Ovary (tissue), 10 donors: ENCODE measurements at regions of chr22 and their contacts with region 1.

Region 1: GRCh38 chr22:23385291-23386244 is 194.5 kb downstream of the IGLL1 start:
- DNase-seq: peak; percentile 82 to 93 (median 90)
- H3K4me3 ChIP-seq: no peak overlapping the region
- H3K27ac ChIP-seq: peak overlapping the region in 1 of 2 donors; percentile 65
- H3K4me1 ChIP-seq: peaks cover 22% of the 10 kb centered on the region
- H3K27me3 ChIP-seq: no peaks in the 10 kb centered on the region
- CTCF ChIP-seq: peak; percentile 98 to 99 (median 99)
- EP300 ChIP-seq: no peak
- POLR2A ChIP-seq: no peak

Region 2: DNA sequence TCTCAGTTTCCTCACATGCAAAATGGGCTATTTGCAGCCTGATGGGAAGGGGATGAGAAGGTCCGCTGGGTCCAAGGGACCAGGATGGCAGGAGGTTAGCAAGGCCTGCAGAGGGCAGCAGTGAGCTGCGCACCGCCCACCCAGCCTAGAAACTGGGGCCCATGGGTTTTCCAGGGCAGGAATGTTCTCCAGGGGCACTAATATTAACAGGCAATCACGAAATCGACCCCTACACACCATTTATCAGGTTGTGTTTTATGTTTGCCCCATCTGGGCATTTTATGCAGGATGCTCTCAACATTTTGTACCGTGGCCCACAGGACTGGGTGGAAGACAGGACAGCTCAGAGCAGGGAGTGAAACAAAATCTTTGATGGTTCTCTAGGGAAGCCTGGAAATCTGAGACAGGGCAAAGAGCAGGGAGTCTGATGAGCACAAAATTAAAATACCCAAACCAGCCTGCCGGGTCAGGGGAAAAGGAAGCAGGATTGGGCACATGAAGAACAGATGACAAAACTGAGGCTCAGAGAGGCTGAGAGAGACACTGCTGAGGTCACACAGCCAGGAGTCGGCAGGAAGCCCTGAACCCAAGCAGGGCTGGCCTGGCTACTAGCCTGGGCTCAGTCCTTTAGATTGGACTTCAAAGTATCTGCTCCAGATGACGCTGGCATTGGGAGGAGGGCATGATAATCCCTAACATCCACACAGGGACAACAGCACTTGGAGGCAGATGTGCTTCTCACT is 206.9 kb before region 1 on chr22:
- intact Hi-C with region 1: loop called in 3 of 4 experiments (anchors 2 to 10 kb)
- DNase-seq: peak; percentile 67 to 85 (median 78)
- H3K4me3 ChIP-seq: no peak overlapping the region
- H3K27ac ChIP-seq: no peak overlapping the region
- H3K4me1 ChIP-seq: peaks cover 22% of the 10 kb centered on the region
- H3K27me3 ChIP-seq: no peaks in the 10 kb centered on the region
- CTCF ChIP-seq: peak; percentile 95 to 96 (median 95)
- EP300 ChIP-seq: no peak
- POLR2A ChIP-seq: peak; percentile 28

Region 3: DNA sequence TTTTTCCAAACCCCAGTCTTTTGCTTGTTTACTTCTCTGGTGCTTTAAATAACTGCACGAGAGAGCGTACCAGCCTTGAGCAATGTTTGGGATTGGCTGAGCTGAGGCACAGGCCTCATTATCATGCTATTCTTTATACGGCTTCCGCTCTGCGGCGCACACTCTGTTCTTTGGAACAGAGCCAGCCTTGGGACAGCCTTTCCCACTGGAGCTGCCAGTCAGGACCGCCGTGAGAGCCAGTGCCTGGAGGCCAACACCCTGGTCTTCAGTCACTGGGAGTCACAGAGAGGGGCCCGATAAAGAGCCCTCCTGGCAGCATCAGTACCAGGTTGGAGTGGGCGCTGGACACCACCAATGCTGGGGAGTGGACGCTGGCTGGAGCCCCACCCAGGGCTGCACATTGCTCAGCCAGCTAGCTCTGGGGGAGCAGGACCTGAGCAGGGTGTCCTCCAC is 79.6 kb before region 1 on chr22:
- intact Hi-C with region 1: loop called in 2 of 4 experiments (anchors 10 kb)
- DNase-seq: peak; percentile 78 to 90 (median 89)
- H3K4me3 ChIP-seq: no peak overlapping the region
- H3K27ac ChIP-seq: peak overlapping the region; percentile 52 to 82
- H3K4me1 ChIP-seq: peaks cover 18% of the 10 kb centered on the region
- H3K27me3 ChIP-seq: no peaks in the 10 kb centered on the region
- CTCF ChIP-seq: no peak
- EP300 ChIP-seq: peak; percentile 30
- POLR2A ChIP-seq: no peak

Region 4: GRCh38 chr22:23315341-23315917 is 70.1 kb before region 1 on chr22:
- intact Hi-C with region 1: loop called in 2 of 4 experiments (anchors 1 to 10 kb)
- DNase-seq: peak; percentile 59 to 86 (median 86)
- H3K4me3 ChIP-seq: no peak overlapping the region
- H3K27ac ChIP-seq: peak overlapping the region in 1 of 2 donors; percentile 13
- H3K4me1 ChIP-seq: peaks cover 2% of the 10 kb centered on the region
- H3K27me3 ChIP-seq: no peaks in the 10 kb centered on the region
- CTCF ChIP-seq: peak; percentile 75 to 93 (median 86)
- EP300 ChIP-seq: no peak
- POLR2A ChIP-seq: no peak

Region 5: DNA sequence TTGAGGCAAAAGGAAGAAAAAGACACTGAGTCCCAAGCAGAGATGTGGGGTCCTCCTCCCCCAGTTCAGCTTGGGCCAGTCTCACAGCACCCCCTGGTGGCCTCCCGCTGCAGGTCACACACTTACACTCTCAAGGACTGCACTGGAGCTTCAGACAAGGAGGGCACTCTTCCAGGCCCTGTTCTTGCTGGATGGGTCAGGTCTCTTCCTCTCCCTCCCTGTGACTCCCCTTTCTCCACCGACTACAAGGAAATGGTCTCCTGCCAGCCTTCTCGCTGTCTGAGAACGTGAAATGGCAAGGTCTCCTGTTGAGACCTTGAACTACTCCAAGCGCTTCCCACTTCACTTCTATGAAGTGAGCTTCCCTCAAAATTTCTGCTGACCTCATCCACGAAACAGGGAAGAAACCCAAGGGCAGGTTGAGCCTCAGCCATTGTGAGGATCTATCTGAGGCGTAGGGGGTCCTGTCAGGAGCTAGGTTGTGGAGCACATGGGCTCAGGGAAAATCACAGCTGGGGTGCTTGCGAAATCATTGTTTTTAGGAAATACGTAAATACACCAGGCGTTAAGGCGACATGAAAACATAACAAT is 205.7 kb after region 1 on chr22:
- intact Hi-C with region 1: loop called in 1 of 4 experiments (anchors 5 kb)
- DNase-seq: peak; percentile 90 to 95 (median 92)
- H3K4me3 ChIP-seq: no peak overlapping the region
- H3K27ac ChIP-seq: peak overlapping the region in 1 of 2 donors; percentile 90
- H3K4me1 ChIP-seq: peaks cover 7% of the 10 kb centered on the region
- H3K27me3 ChIP-seq: no peaks in the 10 kb centered on the region
- CTCF ChIP-seq: peak; percentile 87 to 93 (median 91)
- EP300 ChIP-seq: no peak
- POLR2A ChIP-seq: no peak